Head of caudate nucleus (tissue), 42 donors: ENCODE measurements at regions of chr12 and their contacts with region 1.

Region 1: GRCh38 chr12:111313833-111314259 is 55.0 kb downstream of the PHETA1 start:
- DNase-seq: peak; percentile 49 to 91 (median 78)

Region 2: GRCh38 chr12:110937104-110937641 is 376.7 kb before region 1 on chr12:
- intact Hi-C with region 1: loop called (anchors 5 kb)
- DNase-seq: peak; percentile 5 to 86 (median 66)

Region 3: GRCh38 chr12:111024205-111024801 is 289.5 kb before region 1 on chr12:
- intact Hi-C with region 1: loop called (anchors 10 kb)
- DNase-seq: peak in 40 of 42 donors; percentile 2 to 76 (median 42)